A549 (cell line): ENCODE measurements at regions of chr20 and their contacts with region 1.

Region 1: GRCh38 chr20:62793912-62794724 is 2.2 kb upstream of the MRGBP start:
- DNase-seq: peak; percentile 93 to 97
- ATAC-seq: peak; percentile 65 to 83
- H3K4me3 ChIP-seq: peak overlapping the region; percentile 64
- H3K27ac ChIP-seq: peak overlapping the region; percentile 92 to 100
- H3K4me1 ChIP-seq: peaks cover 29% of the 10 kb centered on the region
- CTCF ChIP-seq: no peak
- EP300 ChIP-seq: no peak
- POLR2A ChIP-seq: peak; percentile 67
- RAD21 ChIP-seq: no peak

Region 2: DNA sequence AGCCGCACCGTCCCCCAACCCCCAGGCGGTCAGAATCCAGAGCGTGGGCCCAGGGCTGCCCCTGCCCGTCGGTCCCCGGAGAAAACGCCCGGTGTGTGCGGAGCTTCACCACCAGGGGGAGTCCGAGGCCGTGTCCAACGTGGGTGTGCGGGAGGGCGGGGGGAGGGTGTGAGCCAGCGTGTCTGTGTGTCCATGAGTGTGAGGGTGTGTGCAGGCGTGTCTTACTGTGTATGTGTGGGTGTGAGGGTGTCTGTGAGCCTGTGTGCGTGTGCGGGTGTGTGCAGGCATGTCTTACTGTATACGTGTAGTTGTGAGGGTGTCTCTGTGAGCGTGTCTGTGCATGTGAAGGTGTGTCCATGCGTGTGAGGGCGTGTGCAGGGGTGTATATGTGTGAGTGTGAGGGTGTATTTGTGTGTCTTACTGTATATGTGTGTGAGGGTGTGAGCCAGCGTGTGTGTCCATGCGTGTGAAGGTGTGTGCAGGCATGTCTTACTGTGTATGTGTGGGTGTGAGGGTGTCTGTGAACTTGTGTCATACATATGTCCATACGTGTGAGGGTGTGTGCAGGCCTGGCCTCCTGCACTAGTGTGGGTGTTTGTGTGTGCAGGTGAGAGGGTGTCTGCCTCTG is 293.8 kb before region 1 on chr20:
- CTCF ChIA-PET with region 1: interaction called, 12 read pairs
- POLR2A ChIA-PET with region 1: no interaction called
- DNase-seq: peak; percentile 40 to 80
- ATAC-seq: peak; percentile 55 to 77; a peak in 5 of 6 replicates
- H3K4me3 ChIP-seq: no peak overlapping the region
- H3K27ac ChIP-seq: no peak overlapping the region
- H3K4me1 ChIP-seq: peaks cover 14% of the 10 kb centered on the region
- CTCF ChIP-seq: peak; percentile 76
- EP300 ChIP-seq: no peak
- POLR2A ChIP-seq: no peak
- RAD21 ChIP-seq: peak; percentile 74 to 75

Region 3: DNA sequence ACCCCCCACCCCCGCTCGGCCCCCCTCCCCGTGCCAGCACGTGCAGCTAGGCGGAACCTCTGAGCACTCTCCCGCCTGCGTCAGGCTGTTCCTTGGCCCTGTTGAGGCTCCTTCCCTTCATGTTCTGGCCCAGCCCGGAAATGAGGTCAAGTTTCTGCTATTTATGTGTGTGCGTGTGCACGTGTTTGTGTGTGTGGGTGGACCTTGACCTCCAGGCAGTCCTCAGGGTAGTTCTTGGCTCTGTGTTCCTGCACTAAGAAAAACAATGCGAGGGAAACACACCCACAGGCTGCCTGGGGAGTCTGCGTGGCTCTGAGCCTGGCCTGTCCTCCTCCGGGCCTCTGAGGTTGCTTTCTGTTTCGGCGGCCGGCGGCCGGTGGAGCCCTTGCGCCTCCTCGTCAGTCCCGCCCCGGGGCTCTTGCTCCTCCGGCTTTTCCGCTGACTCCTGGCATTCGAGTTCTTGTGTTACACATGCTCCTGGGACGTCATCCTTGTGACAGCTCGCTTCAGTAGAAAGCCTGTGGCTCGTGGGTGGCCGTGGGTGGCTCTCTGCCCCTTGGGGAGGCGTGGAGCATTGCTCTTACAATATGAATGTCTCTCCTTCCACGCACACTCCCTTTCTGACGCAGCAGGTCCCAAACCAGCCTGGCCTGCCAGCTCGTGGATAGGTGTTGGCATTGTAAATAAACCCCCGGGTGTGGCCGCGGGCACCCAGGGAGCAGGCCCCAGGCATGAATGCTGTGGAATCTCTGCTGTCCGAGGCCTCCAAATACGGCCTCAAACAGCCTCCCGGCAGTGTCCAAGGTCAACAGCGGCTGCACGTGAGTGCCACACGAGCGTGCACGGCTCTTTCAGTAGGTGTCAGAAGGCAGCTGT is 141.8 kb before region 1 on chr20:
- CTCF ChIA-PET with region 1: interaction called, 31 read pairs
- POLR2A ChIA-PET with region 1: interaction called, 5 read pairs
- DNase-seq: peak; percentile 79 to 88
- ATAC-seq: peak; percentile 70 to 88
- H3K4me3 ChIP-seq: peak overlapping the region; percentile 25; the same call in 2 of the 3 replicates
- H3K27ac ChIP-seq: peak overlapping the region; percentile 74 to 85
- H3K4me1 ChIP-seq: peaks cover 19% of the 10 kb centered on the region
- CTCF ChIP-seq: no peak
- EP300 ChIP-seq: no peak
- POLR2A ChIP-seq: no peak
- RAD21 ChIP-seq: no peak

Region 4: GRCh38 chr20:62685781-62686555 is 108.2 kb before region 1 on chr20:
- CTCF ChIA-PET with region 1: interaction called, 36 read pairs
- POLR2A ChIA-PET with region 1: no interaction called
- DNase-seq: no peak
- ATAC-seq: no peak
- H3K4me3 ChIP-seq: no peak overlapping the region
- H3K27ac ChIP-seq: no peak overlapping the region
- H3K4me1 ChIP-seq: no peaks in the 10 kb centered on the region
- CTCF ChIP-seq: no peak
- EP300 ChIP-seq: no peak
- POLR2A ChIP-seq: no peak
- RAD21 ChIP-seq: no peak

Region 5: GRCh38 chr20:62723351-62723750 is 70.8 kb before region 1 on chr20:
- CTCF ChIA-PET with region 1: interaction called, 12 read pairs
- POLR2A ChIA-PET with region 1: no interaction called
- DNase-seq: no peak
- ATAC-seq: no peak
- H3K4me3 ChIP-seq: no peak overlapping the region
- H3K27ac ChIP-seq: no peak overlapping the region
- H3K4me1 ChIP-seq: no peaks in the 10 kb centered on the region
- CTCF ChIP-seq: no peak
- EP300 ChIP-seq: no peak
- POLR2A ChIP-seq: no peak
- RAD21 ChIP-seq: no peak

Region 6: GRCh38 chr20:62768481-62769287 is 25.4 kb before region 1 on chr20:
- CTCF ChIA-PET with region 1: interaction called, 26 read pairs
- POLR2A ChIA-PET with region 1: interaction called, 3 read pairs
- DNase-seq: no peak
- ATAC-seq: no peak; a peak in 1 of 6 replicates
- H3K4me3 ChIP-seq: no peak overlapping the region
- H3K27ac ChIP-seq: 0 out of 6 replicates have a peak overlapping the region, but pooled peaks of 1 of the 2 experiments have one; percentile 1
- H3K4me1 ChIP-seq: peaks cover 6% of the 10 kb centered on the region; the same call in 1 of the 3 replicates
- CTCF ChIP-seq: no peak
- EP300 ChIP-seq: no peak
- POLR2A ChIP-seq: no peak
- RAD21 ChIP-seq: no peak